ENCODE measurements at regions of chr1 and their contacts with region 1.

Region 1: DNA sequence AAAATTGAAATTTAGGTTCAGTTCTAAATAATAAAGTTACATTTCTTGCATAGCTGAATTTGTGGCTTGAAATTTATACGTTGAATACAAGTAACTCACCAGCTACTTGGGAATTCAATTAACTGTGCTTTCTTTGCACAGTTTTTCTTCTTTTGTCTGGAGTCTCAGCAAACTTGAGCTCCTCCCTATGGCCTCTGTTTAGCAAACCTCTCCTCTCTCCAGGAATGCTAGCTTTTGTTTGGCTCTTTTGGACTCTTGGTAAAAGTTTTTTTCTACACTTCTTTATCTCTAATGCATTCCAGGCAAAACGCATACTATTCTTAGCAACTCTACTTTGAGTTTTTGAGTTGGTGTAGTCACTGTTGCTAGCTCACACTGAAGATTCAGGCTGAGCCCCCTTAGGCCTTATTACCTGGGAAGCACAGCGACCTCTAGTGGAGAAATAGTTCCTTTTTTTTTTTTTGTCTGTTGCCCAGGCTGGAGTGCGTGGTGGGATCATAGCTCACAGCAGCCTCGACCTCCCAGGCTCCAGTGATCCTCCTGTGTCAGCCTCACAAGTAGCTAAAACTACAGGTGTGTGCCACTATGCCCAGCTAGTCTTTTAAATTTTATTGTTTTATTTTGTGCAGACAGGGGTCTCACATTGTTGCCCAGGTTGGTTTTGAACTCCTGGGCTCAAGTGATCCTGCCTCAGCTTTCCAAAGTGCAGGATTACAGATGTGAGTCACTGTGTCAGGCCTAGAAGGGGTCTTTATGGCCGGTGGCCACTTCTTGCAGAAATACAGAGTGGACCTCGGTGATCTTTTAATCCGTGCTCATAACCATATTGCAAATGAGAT is 61.7 kb downstream of the CASQ2 start:
- DNase-seq: peak; percentile 51
- ATAC-seq: peak; percentile 87
- H3K4me3 ChIP-seq: no peak overlapping the region
- H3K27ac ChIP-seq: no peak overlapping the region
- H3K4me1 ChIP-seq: no peaks in the 10 kb centered on the region
- H3K27me3 ChIP-seq: no peaks in the 10 kb centered on the region; the same call in 1 of the 2 replicates
- CTCF ChIP-seq: peak; percentile 60 to 86 (median 64); a peak in 5 of 6 replicates
- POLR2A ChIP-seq: no peak
- RAD21 ChIP-seq: peak; percentile 65

Region 2: GRCh38 chr1:115642168-115643072 is 64.4 kb before region 1 on chr1:
- CTCF ChIA-PET with region 1: interaction called, 9 read pairs
- POLR2A ChIA-PET with region 1: no interaction called
- RAD21 ChIA-PET with region 1: interaction called in 1 of 2 experiments, 5 read pairs
- intact Hi-C with region 1: loop called (anchors 2 kb)
- DNase-seq: no peak
- ATAC-seq: peak; percentile 53
- H3K4me3 ChIP-seq: peak overlapping the region; percentile 75 to 96
- H3K27ac ChIP-seq: peak overlapping the region; percentile 88
- H3K4me1 ChIP-seq: peaks cover 13 to 33% of the 10 kb centered on the region in 2 experiments; a peak in 3 of 4 replicates
- H3K27me3 ChIP-seq: no peaks in the 10 kb centered on the region
- CTCF ChIP-seq: 0 out of 6 replicates have a peak, but pooled peaks of 1 of the 3 experiments have one; percentile 2
- POLR2A ChIP-seq: no peak
- RAD21 ChIP-seq: peak; percentile 30; the same call in 1 of the 2 replicates

Region 3: GRCh38 chr1:115717541-115717940 is 10.7 kb after region 1 on chr1:
- CTCF ChIA-PET with region 1: interaction called, 28 read pairs
- POLR2A ChIA-PET with region 1: no interaction called
- RAD21 ChIA-PET with region 1: no interaction called
- intact Hi-C with region 1: no loop called
- DNase-seq: peak; percentile 32
- ATAC-seq: peak; percentile 68
- H3K4me3 ChIP-seq: no peak overlapping the region
- H3K27ac ChIP-seq: no peak overlapping the region
- H3K4me1 ChIP-seq: peaks cover 7 to 15% of the 10 kb centered on the region in 2 experiments; a peak in 2 of 4 replicates
- H3K27me3 ChIP-seq: no peaks in the 10 kb centered on the region
- CTCF ChIP-seq: peak; percentile 31 to 58 (median 48); a peak in 4 of 6 replicates
- POLR2A ChIP-seq: no peak
- RAD21 ChIP-seq: peak; percentile 66

Region 4: GRCh38 chr1:115764541-115764940 is 57.7 kb after region 1 on chr1:
- CTCF ChIA-PET with region 1: interaction called, 19 read pairs
- POLR2A ChIA-PET with region 1: no interaction called
- RAD21 ChIA-PET with region 1: interaction called in 1 of 2 experiments, 5 read pairs
- intact Hi-C with region 1: loop called (anchors 5 kb)
- DNase-seq: peak; percentile 34
- ATAC-seq: peak; percentile 78
- H3K4me3 ChIP-seq: no peak overlapping the region
- H3K27ac ChIP-seq: no peak overlapping the region
- H3K4me1 ChIP-seq: peaks cover 0 to 5% of the 10 kb centered on the region in 2 experiments; a peak in 2 of 4 replicates
- H3K27me3 ChIP-seq: no peaks in the 10 kb centered on the region
- CTCF ChIP-seq: peak; percentile 35 to 68 (median 55); a peak in 5 of 6 replicates
- POLR2A ChIP-seq: no peak
- RAD21 ChIP-seq: peak; percentile 82

Region 5: DNA sequence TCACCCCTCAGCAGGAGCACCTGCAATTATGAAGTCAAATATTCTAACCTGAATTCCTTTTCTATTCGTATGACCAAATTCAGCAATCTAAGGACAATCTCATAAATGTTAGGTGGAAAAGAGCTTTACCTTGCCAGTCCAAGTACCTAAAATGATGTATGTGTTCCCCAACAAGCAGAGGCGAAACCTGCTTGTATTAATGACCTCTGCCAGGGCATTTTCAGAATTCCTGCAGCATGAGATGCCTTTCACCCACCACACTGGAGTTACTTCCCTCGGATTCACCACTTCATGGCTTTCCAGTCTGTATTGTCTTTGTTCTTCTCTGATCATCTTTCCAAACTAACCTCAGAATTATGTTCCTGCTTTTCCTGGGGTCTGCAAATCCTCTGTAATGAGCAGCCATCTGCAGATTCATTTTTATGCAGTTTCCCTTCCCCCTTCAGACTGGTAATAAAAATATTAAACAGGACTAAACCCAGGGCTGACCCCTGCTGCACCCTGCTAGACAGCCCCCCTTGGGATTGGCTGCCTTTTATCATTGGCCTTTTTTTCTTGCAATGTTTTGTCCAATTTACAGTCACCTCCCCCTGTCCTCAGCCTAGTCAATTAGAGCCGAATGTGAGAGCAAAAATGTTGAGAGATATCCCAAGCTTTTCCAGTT is 88.3 kb after region 1 on chr1:
- CTCF ChIA-PET with region 1: no interaction called
- POLR2A ChIA-PET with region 1: no interaction called
- RAD21 ChIA-PET with region 1: no interaction called
- intact Hi-C with region 1: no loop called
- DNase-seq: no peak
- ATAC-seq: no peak
- H3K4me3 ChIP-seq: no peak overlapping the region
- H3K27ac ChIP-seq: no peak overlapping the region
- H3K4me1 ChIP-seq: no peaks in the 10 kb centered on the region
- H3K27me3 ChIP-seq: no peaks in the 10 kb centered on the region
- CTCF ChIP-seq: no peak
- POLR2A ChIP-seq: no peak
- RAD21 ChIP-seq: no peak

Measured in HCT116 (cell line).